ENCODE measurements at regions of chr15 and their contacts with region 1.

Region 1: GRCh38 chr15:32884146-32884545 is 166.3 kb downstream of the GREM1 start:
- DNase-seq: no peak
- H3K4me3 ChIP-seq: no peak overlapping the region
- H3K27ac ChIP-seq: no peak overlapping the region
- H3K4me1 ChIP-seq: no peaks in the 10 kb centered on the region
- H3K27me3 ChIP-seq: no peaks in the 10 kb centered on the region
- CTCF ChIP-seq: no peak

Region 2: GRCh38 chr15:32818758-32819447 is 65.2 kb before region 1 on chr15:
- CTCF ChIA-PET with region 1: no interaction called
- dilution Hi-C with region 1: no loop called
- in situ Hi-C with region 1: no loop called
- intact Hi-C with region 1: no loop called
- DNase-seq: no peak
- H3K4me3 ChIP-seq: no peak overlapping the region
- H3K27ac ChIP-seq: no peak overlapping the region
- H3K4me1 ChIP-seq: no peaks in the 10 kb centered on the region
- H3K27me3 ChIP-seq: no peaks in the 10 kb centered on the region
- CTCF ChIP-seq: no peak

Region 3: DNA sequence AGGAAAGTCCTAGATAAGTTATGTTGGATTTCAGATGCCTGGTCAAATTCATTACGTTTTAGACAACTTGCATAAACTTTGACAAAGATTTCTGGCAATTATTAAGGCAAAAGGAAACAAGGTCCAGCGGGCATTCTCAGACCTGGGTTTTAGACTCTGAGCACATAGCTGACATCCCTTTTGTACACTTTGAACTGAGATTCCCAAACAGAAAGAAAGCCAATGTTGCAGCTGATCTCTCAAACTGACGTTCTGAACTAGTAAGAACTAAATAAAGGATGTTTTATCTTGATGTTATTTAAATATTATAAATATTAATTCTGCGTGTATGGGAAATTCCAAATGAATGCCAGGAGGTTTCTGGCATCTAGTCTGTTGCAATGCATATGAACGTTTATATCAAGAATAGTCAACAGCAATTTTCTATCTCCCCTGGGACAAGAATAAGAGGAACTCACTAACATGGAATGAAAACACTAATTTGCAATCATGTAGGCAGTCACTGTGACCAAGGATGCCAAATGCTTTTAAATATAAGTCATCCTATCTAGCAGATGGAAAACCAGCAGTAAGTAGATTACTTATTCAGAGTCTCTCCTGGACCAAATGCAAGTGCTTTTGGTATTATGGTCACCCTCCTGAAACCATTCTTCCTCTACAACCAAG is 35.7 kb after region 1 on chr15:
- CTCF ChIA-PET with region 1: no interaction called
- dilution Hi-C with region 1: no loop called
- in situ Hi-C with region 1: no loop called
- intact Hi-C with region 1: loop called (anchors 5 kb)
- DNase-seq: no peak
- H3K4me3 ChIP-seq: no peak overlapping the region
- H3K27ac ChIP-seq: no peak overlapping the region
- H3K4me1 ChIP-seq: no peaks in the 10 kb centered on the region
- H3K27me3 ChIP-seq: no peaks in the 10 kb centered on the region
- CTCF ChIP-seq: no peak

Region 4: GRCh38 chr15:32994810-32995424 is 110.8 kb after region 1 on chr15:
- CTCF ChIA-PET with region 1: no interaction called
- dilution Hi-C with region 1: no loop called
- in situ Hi-C with region 1: no loop called
- intact Hi-C with region 1: no loop called
- DNase-seq: no peak
- H3K4me3 ChIP-seq: no peak overlapping the region
- H3K27ac ChIP-seq: no peak overlapping the region
- H3K4me1 ChIP-seq: no peaks in the 10 kb centered on the region
- H3K27me3 ChIP-seq: no peaks in the 10 kb centered on the region
- CTCF ChIP-seq: peak; percentile 56 to 67

Measured in mammary epithelial cell (primary cell).